ENCODE measurements at regions of chr11 and their contacts with region 1.

Region 1: DNA sequence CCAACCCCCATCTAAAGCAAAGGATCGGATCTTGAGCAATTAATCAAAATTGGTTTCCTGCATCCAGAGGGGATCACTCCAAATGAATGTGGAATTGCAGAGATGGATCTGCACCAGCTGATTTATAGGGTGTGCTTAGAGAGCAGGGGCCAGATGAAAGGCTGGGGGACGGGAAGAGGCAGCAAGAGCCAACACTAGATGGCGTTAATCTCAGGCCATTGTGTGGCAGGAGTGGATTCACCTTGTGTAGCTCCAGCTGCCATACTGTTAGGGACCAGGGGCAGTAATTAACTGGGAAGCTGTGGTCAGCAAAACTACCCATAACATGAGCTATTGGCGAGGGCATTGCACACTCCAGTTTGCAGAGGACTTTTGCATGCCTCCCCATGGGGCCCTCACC is 35.6 kb downstream of the SERPINH1 start:
- DNase-seq: peak; percentile 78
- H3K4me3 ChIP-seq: no peak overlapping the region; a peak in 1 of 4 replicates
- H3K27ac ChIP-seq: no peak overlapping the region
- H3K4me1 ChIP-seq: peaks cover 5 to 17% of the 10 kb centered on the region in 2 experiments; a peak in 3 of 4 replicates
- H3K27me3 ChIP-seq: no peaks in the 10 kb centered on the region
- CTCF ChIP-seq: peak; percentile 65
- EP300 ChIP-seq: no peak
- RAD21 ChIP-seq: peak; percentile 79

Region 2: GRCh38 chr11:75616281-75616680 is 18.6 kb after region 1 on chr11:
- CTCF ChIA-PET with region 1: interaction called, 11 read pairs
- POLR2A ChIA-PET with region 1: no interaction called
- DNase-seq: no peak
- H3K4me3 ChIP-seq: no peak overlapping the region
- H3K27ac ChIP-seq: no peak overlapping the region; a peak in 1 of 4 replicates
- H3K4me1 ChIP-seq: peaks cover 0 to 13% of the 10 kb centered on the region in 2 experiments; a peak in 2 of 4 replicates
- H3K27me3 ChIP-seq: no peaks in the 10 kb centered on the region
- CTCF ChIP-seq: no peak
- EP300 ChIP-seq: no peak
- RAD21 ChIP-seq: no peak